Dorsolateral prefrontal cortex (tissue), 120 donors: ENCODE measurements at regions of chr10 and their contacts with region 1.

Region 1: DNA sequence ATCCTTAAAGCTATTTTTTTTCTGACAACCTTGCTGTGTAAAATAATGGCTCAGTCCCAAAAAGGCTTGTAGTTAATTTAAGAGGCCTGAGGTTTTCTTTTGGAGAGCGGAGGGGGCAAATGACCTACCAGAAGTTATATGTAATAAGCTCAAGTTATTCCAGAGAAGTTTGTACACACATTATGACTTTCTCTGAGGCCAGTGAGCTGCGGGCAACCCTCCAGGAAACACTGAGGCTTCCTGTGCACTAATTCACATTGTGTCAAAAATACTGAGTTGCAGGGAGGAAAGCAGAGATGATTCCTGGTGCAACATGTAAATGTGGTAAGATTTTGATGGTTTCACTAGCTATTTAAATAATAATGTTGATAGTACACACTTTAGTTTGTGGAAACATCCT is 188.6 kb downstream of the DIP2C start:
- DNase-seq: peak in 2 of 10 donors; percentile 7 to 18
- H3K4me3 ChIP-seq: no peak overlapping the region
- H3K27ac ChIP-seq: no peak overlapping the region
- H3K27me3 ChIP-seq: no peaks in the 10 kb centered on the region
- CTCF ChIP-seq: no peak

Region 2: DNA sequence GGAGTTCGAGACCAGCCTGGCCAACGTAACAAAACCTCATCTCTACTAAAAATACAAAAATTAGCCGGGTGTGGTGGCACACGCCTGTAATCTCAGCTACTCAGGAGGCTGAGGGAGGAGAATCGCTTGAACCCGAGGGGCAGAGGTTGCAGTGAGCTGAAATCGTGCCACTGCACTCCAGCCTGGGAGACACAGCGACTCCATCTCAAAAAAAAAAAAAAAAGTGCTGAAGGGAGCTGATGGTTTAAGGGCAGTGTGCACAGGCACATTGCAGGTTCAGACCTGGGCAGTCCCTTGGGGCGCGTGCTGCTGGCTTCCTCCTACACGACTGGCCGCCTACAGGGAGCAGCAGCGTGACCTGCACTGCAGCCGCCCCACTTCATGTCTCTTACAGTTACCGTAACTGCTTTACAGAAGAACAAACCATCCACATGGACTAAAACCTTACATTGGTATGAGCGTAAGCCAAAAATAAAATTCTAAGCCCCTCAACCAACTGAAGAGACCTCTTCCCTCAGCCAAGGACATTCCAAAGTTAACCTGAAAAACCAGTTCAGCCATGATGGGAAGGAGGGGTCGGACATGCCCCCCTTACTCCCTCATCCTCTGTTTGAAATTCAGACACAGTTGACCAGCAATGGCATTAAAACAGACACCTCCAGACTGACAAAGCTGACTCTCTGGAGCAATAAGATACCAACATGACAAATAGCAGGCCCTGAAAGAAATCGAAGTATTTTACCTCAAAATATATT is 103.4 kb before region 1 on chr10:
- intact Hi-C with region 1: loop called in 1 of 2 experiments (anchors 10 kb)
- DNase-seq: no peak
- H3K4me3 ChIP-seq: no peak overlapping the region
- H3K27ac ChIP-seq: peak overlapping the region in 3 of 59 donors; percentile 4 to 13 (median 13)
- H3K27me3 ChIP-seq: no peaks in the 10 kb centered on the region
- CTCF ChIP-seq: no peak

Region 3: GRCh38 chr10:451021-451471 is 49.8 kb before region 1 on chr10:
- intact Hi-C with region 1: loop called in 1 of 2 experiments (anchors 5 kb)
- DNase-seq: no peak
- H3K4me3 ChIP-seq: no peak overlapping the region
- H3K27ac ChIP-seq: peak overlapping the region in 24 of 59 donors; percentile 6 to 66 (median 22)
- H3K27me3 ChIP-seq: no peaks in the 10 kb centered on the region
- CTCF ChIP-seq: no peak